ENCODE measurements at regions of chr6 and their contacts with region 1.

Region 1: DNA sequence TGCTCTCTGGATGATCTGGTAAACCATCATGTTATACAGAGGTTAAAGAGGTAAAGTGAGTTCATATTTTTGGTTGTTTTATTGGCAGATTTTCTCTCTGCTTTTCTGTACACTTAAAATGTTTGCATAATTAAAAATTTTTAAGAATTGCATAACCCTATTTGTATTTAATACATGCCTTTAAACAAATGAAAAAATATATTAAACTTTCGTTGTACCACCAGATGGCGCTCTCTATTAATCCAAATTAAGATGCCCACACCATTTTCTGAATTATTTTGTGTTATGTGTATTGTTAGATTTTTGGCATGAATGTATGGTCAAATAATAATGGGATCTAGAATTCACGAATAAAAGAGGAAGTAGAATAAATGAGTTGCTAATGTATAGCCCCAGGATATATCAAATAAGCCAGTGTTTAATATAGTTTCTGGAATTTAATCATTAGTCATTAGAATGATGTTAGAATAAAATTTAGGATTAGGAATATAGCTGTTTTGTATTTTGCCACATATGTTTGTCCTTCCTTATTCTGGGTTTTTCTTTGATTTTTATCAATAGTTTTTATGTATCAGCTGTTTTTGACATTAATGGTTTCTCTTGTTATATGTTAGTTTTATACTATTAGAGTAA is 38.9 kb downstream of the SMAP1 start:
- DNase-seq: no peak
- CTCF ChIP-seq: peak; percentile 43

Region 2: DNA sequence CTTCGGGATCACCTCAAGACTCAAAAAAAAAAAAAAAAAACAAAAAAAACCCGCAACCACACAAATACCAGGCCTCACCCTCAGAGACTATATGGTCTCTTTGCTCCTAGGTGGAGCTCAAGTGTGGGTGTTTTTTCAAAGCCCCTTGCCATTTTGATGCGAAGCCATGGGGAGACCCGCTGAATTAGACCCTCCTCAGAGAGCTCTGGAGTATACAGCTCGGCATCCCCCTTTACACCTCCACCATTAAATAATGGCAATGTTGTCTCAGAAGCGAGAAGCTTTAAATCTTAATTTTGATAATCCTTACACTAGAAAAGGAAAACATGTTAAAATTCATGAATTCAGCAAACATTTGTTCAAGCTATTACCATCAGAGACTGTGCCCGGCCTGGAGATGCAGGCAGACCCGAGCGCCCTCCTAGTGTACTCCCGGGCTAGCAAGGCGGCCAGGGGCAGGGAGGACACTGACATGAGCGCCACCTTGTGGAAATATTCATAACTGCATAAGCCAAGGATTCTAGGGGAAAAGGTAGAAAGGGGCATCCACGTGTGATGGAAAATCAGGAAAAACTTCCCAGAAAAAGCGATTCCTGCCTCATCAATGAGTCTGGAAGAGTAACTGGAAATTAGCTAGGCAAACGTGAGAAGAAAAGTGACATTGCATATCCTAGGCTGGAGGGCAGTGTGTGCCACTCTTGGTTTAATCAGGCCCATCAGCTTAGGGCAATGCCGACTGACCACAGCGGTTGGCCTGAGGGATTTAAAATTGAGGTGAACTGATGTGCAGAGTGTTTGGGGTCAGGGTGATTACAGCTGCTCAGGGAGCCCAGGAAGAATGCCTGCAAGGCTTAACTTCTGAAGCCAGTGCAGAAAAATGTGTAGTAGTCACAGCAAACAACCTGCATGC is 177.7 kb after region 1 on chr6:
- in situ Hi-C with region 1: loop called (anchors 10 kb)
- DNase-seq: peak; percentile 75
- CTCF ChIP-seq: peak; percentile 89

Measured in GM13977 (cell line).